B cell (primary cell): ENCODE measurements at regions of chr19 and their contacts with region 1.

Region 1: GRCh38 chr19:37217855-37218591 is at the start of gene ZNF383:
- DNase-seq: peak; percentile 92
- ATAC-seq: peak; percentile 90
- H3K4me3 ChIP-seq: peak within 1 kb of the TSS; percentile 78 to 96 (median 88)
- H3K4me3 Mint-ChIP-seq: peak within 1 kb of the TSS; percentile 97
- H3K27ac ChIP-seq: peak within 1 kb of the TSS; percentile 77 to 86
- H3K27ac Mint-ChIP-seq: peak within 1 kb of the TSS; percentile 100
- H3K4me1 ChIP-seq: peaks cover 10 to 12% of the 10 kb centered on the region in 2 donors
- H3K4me1 Mint-ChIP-seq: peaks cover 24% of the 10 kb centered on the region
- H3K27me3 ChIP-seq: no peaks in the 10 kb centered on the region
- H3K27me3 Mint-ChIP-seq: no peaks in the 10 kb centered on the region
- CTCF ChIP-seq: no peak
- total RNA-seq, gene ZNF383: 37.2 and 42.2 TPM in 2 replicates

Region 2: GRCh38 chr19:36378625-36379509 is 839.2 kb before region 1 on chr19 and contains the start of gene ZFP14:
- CTCF ChIA-PET with region 1: no interaction called
- POLR2A ChIA-PET with region 1: no interaction called
- intact Hi-C with region 1: loop called (anchors 5 kb)
- DNase-seq: peak; percentile 97
- ATAC-seq: peak; percentile 98
- H3K4me3 ChIP-seq: peak within 1 kb of the TSS; percentile 79 to 95 (median 85)
- H3K4me3 Mint-ChIP-seq: peak within 1 kb of the TSS; percentile 82
- H3K27ac ChIP-seq: peak within 1 kb of the TSS; percentile 83 to 94
- H3K27ac Mint-ChIP-seq: peak within 1 kb of the TSS; percentile 97
- H3K4me1 ChIP-seq: peaks cover 13 to 19% of the 10 kb centered on the region in 2 donors
- H3K4me1 Mint-ChIP-seq: peaks cover 19% of the 10 kb centered on the region
- H3K27me3 ChIP-seq: no peaks in the 10 kb centered on the region
- H3K27me3 Mint-ChIP-seq: no peaks in the 10 kb centered on the region
- CTCF ChIP-seq: peak; percentile 66
- total RNA-seq, gene ZFP14: 22.4 and 22.7 TPM in 2 replicates

Region 3: GRCh38 chr19:36665832-36666231 is 552.2 kb before region 1 on chr19:
- CTCF ChIA-PET with region 1: no interaction called
- POLR2A ChIA-PET with region 1: no interaction called
- intact Hi-C with region 1: loop called (anchors 5 kb)
- DNase-seq: peak; percentile 31
- ATAC-seq: no peak
- H3K4me3 ChIP-seq: peak overlapping the region; percentile 63 to 91 (median 80)
- H3K4me3 Mint-ChIP-seq: peak overlapping the region; percentile 98
- H3K27ac ChIP-seq: peak overlapping the region in 1 of 2 donors; percentile 81
- H3K27ac Mint-ChIP-seq: peak overlapping the region; percentile 90
- H3K4me1 ChIP-seq: peaks cover 15 to 19% of the 10 kb centered on the region in 2 donors
- H3K4me1 Mint-ChIP-seq: peaks cover 28% of the 10 kb centered on the region
- H3K27me3 ChIP-seq: no peaks in the 10 kb centered on the region
- H3K27me3 Mint-ChIP-seq: no peaks in the 10 kb centered on the region
- CTCF ChIP-seq: no peak

Region 4: GRCh38 chr19:36915992-36916830 is 301.8 kb before region 1 on chr19 and contains the starts of genes ZNF568 and ZNF829:
- CTCF ChIA-PET with region 1: no interaction called
- POLR2A ChIA-PET with region 1: no interaction called
- intact Hi-C with region 1: loop called (anchors 1 kb)
- DNase-seq: peak; percentile 96
- ATAC-seq: peak; percentile 89
- H3K4me3 ChIP-seq: peak within 1 kb of the TSS; percentile 77 to 90 (median 86)
- H3K4me3 Mint-ChIP-seq: peak within 1 kb of the TSS; percentile 96
- H3K27ac ChIP-seq: peak within 1 kb of the TSS; percentile 86 to 95
- H3K27ac Mint-ChIP-seq: peak within 1 kb of the TSS; percentile 95
- H3K4me1 ChIP-seq: peaks cover 11 to 12% of the 10 kb centered on the region in 2 donors
- H3K4me1 Mint-ChIP-seq: peaks cover 24% of the 10 kb centered on the region
- H3K27me3 ChIP-seq: no peaks in the 10 kb centered on the region
- H3K27me3 Mint-ChIP-seq: no peaks in the 10 kb centered on the region
- CTCF ChIP-seq: peak; percentile 81
- total RNA-seq, gene ZNF568: 19.4 and 21.1 TPM in 2 replicates
- total RNA-seq, gene ZNF829: 8.4 and 9.6 TPM in 2 replicates

Region 5: DNA sequence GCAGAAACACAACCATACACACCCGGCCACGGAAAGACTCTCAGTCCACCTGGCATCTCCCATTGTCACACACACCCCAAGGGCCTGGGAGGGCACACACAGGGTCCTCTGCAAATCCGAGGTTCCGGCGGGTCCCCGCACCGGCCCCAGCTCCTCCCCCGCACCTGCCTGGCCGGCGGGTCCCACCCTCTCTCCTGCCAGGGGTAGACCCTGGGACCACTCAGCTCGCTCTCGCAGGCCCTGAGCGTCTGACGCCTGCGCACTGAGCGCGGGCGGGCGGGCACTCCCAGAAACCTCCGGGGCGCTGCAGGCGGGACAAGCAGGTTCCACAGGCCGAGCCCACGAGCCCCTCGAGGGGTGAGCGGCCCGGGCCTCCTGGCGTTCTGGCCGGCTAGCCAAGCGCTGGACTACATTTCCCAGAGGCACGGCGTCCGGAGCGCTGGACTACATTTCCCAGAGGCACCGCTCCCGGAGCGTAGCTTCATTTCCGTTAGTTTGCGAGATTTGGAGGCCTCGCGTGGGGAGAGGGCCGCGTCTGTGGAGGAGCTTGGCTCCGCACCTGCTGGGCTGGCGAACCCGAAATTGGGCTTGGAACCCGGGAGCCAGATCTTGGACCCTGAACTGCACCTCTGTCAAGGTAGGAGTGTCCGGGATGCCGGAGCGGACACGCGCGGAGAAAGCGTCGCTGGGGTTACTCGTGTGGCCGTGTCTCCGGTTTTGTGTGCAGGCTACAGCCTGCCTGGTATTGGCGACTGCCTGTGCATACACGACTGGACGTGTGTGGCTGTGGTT is 139.9 kb before region 1 on chr19 and contains the start of gene ZNF420:
- CTCF ChIA-PET with region 1: no interaction called
- POLR2A ChIA-PET with region 1: no interaction called
- intact Hi-C with region 1: loop called (anchors 1 kb)
- DNase-seq: peak; percentile 96
- ATAC-seq: peak; percentile 95
- H3K4me3 ChIP-seq: peak within 1 kb of the TSS; percentile 76 to 93 (median 85)
- H3K4me3 Mint-ChIP-seq: peak within 1 kb of the TSS; percentile 93
- H3K27ac ChIP-seq: peak within 1 kb of the TSS; percentile 71 to 89
- H3K27ac Mint-ChIP-seq: peak within 1 kb of the TSS; percentile 96
- H3K4me1 ChIP-seq: peaks cover 14 to 20% of the 10 kb centered on the region in 2 donors
- H3K4me1 Mint-ChIP-seq: peaks cover 29% of the 10 kb centered on the region
- H3K27me3 ChIP-seq: no peaks in the 10 kb centered on the region
- H3K27me3 Mint-ChIP-seq: no peaks in the 10 kb centered on the region
- CTCF ChIP-seq: no peak
- total RNA-seq, gene ZNF420: 17.4 and 24.9 TPM in 2 replicates

Region 6: DNA sequence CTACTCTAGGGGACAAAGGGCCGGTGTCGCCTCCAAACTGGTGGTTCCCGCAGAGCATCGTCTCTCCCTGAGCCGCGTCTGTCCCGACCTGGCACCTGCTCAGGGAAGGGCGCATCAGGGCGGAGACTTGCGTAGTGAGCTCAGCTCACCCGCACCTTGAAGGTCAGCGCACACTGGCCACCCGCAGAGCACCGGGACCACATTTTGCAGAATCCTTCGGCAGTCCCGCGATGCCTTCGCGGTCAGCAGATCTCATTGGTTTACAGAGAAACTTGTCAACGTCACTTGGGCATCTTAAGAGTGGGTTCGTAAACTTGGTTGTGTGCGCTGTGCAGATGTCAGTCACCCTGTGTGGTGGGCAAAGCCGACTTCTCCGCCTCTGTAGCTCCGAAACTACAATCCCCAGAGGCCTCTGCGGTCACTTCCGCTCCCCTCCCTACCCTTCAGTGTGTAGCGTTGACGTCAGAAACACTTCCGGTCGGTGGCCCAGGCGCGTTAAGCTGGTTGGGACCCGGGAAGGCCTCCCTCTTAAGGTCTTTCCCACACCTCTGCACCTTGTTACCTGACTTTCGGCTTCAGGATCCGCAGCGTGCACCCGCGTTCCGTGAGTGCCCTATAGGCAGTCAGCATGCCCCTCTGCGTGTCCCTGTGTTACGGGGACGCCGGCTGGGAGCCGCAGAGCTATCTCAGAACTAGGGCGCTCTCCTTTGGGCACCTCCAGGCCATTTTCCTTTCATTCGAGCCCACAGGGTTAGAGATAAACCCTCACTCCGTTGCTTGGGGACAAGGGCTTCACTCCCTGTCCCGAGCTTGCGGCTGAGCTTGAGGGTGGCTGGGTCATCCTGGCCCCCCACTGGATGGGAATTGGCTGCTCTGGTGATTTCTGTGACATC is 116.4 kb after region 1 on chr19:
- CTCF ChIA-PET with region 1: no interaction called
- POLR2A ChIA-PET with region 1: no interaction called
- intact Hi-C with region 1: loop called (anchors 5 kb)
- DNase-seq: peak; percentile 92
- ATAC-seq: peak; percentile 95
- H3K4me3 ChIP-seq: peak overlapping the region; percentile 59 to 86 (median 83)
- H3K4me3 Mint-ChIP-seq: peak overlapping the region; percentile 92
- H3K27ac ChIP-seq: peak overlapping the region; percentile 62 to 85
- H3K27ac Mint-ChIP-seq: peak overlapping the region; percentile 83
- H3K4me1 ChIP-seq: peaks cover 11 to 16% of the 10 kb centered on the region in 2 donors
- H3K4me1 Mint-ChIP-seq: peaks cover 21% of the 10 kb centered on the region
- H3K27me3 ChIP-seq: no peaks in the 10 kb centered on the region
- H3K27me3 Mint-ChIP-seq: no peaks in the 10 kb centered on the region
- CTCF ChIP-seq: no peak

Region 7: GRCh38 chr19:37594304-37594981 is 376.4 kb after region 1 on chr19 and contains the starts of genes ZNF540 and ZNF571:
- CTCF ChIA-PET with region 1: no interaction called
- POLR2A ChIA-PET with region 1: no interaction called
- intact Hi-C with region 1: loop called (anchors 2 kb)
- DNase-seq: peak; percentile 95
- ATAC-seq: peak; percentile 96
- H3K4me3 ChIP-seq: peak within 1 kb of the TSS; percentile 67 to 88 (median 87)
- H3K4me3 Mint-ChIP-seq: peak within 1 kb of the TSS; percentile 99
- H3K27ac ChIP-seq: peak within 1 kb of the TSS; percentile 93 to 96
- H3K27ac Mint-ChIP-seq: peak within 1 kb of the TSS; percentile 99
- H3K4me1 ChIP-seq: peaks cover 11 to 14% of the 10 kb centered on the region in 2 donors
- H3K4me1 Mint-ChIP-seq: peaks cover 25% of the 10 kb centered on the region
- H3K27me3 ChIP-seq: no peaks in the 10 kb centered on the region
- H3K27me3 Mint-ChIP-seq: no peaks in the 10 kb centered on the region
- CTCF ChIP-seq: no peak
- total RNA-seq, gene ZNF540: 10.7 and 10.8 TPM in 2 replicates
- total RNA-seq, gene ZNF571: 10.0 and 13.1 TPM in 2 replicates